ENCODE measurements at regions of chr5 and their contacts with region 1.

Region 1: GRCh38 chr5:79020861-79021561 is 35.9 kb upstream of the ARSB start:
- DNase-seq: peak; percentile 80
- H3K4me3 ChIP-seq: peak overlapping the region in 1 of 3 experiments; percentile 40
- H3K27ac ChIP-seq: no peak overlapping the region
- H3K4me1 ChIP-seq: peaks cover 16% of the 10 kb centered on the region
- H3K27me3 ChIP-seq: peaks cover 2 to 14% of the 10 kb centered on the region in 2 experiments
- CTCF ChIP-seq: peak; percentile 73 to 78
- POLR2A ChIP-seq: no peak

Region 2: DNA sequence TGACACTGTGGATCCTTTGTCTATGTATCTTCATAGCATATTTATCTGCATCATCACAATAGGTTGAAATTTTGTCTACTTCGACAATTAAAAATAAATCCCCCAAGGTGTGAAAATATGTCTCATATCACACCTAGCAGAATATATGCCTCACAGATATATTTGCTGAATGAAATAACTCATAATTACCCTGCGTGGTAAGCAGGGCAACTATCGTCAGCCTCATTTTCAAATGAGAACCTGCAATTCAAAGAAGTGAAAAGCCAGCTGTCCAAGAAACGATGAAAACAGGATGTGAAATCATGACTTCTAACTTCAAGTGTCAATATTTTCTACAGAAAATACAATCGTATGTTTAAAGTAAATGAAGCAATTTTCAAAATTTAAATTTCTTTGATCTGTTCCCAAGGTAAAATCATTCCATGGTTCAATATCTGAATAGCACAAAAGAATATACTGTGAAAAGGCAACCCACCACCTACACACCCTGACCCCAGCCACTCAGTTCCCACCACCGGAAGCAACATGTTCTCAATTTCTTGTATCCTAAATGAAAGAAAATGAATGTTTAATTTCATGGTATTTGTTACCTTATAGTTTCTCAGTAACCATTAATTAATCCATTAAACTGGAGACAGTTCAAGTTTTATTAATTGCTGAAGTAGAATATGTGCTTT is 1301.9 kb before region 1 on chr5:
- CTCF ChIA-PET with region 1: no interaction called
- POLR2A ChIA-PET with region 1: no interaction called
- dilution Hi-C with region 1: no loop called
- intact Hi-C with region 1: no loop called
- DNase-seq: no peak
- H3K4me3 ChIP-seq: no peak overlapping the region
- H3K27ac ChIP-seq: no peak overlapping the region
- H3K4me1 ChIP-seq: no peaks in the 10 kb centered on the region
- H3K27me3 ChIP-seq: no peaks in the 10 kb centered on the region
- CTCF ChIP-seq: no peak
- POLR2A ChIP-seq: no peak

Region 3: GRCh38 chr5:78458843-78459242 is 562.2 kb before region 1 on chr5:
- CTCF ChIA-PET with region 1: no interaction called
- POLR2A ChIA-PET with region 1: no interaction called
- dilution Hi-C with region 1: no loop called
- intact Hi-C with region 1: no loop called
- DNase-seq: no peak
- H3K4me3 ChIP-seq: no peak overlapping the region
- H3K27ac ChIP-seq: no peak overlapping the region
- H3K4me1 ChIP-seq: no peaks in the 10 kb centered on the region
- H3K27me3 ChIP-seq: no peaks in the 10 kb centered on the region
- CTCF ChIP-seq: no peak
- POLR2A ChIP-seq: no peak

Region 4: DNA sequence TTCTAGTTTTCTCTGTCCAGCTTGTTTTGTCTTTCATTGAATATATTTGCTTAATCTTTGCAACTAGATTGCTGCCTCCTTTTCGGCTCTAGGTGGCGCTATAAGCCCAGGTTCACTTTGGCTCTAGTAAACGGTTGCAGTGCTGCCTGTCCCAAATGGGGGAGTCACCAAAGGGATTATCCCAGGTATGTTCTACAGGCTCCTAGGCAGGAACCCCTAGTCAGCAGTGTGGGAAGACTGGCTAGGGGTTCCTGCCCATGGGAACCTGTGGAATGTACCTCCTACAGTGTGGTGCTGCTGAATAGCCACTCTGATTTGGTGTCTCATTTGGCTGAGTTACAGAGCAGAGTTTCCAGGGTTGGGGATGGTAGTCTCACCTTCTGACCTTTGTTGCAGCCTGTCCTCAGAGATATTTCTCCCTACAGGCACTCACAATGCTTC is 121.1 kb before region 1 on chr5:
- CTCF ChIA-PET with region 1: interaction called, 168 read pairs
- POLR2A ChIA-PET with region 1: no interaction called
- dilution Hi-C with region 1: no loop called
- intact Hi-C with region 1: loop called (anchors 1 kb)
- DNase-seq: peak; percentile 69
- H3K4me3 ChIP-seq: no peak overlapping the region
- H3K27ac ChIP-seq: no peak overlapping the region
- H3K4me1 ChIP-seq: no peaks in the 10 kb centered on the region
- H3K27me3 ChIP-seq: no peaks in the 10 kb centered on the region
- CTCF ChIP-seq: peak; percentile 78 to 82
- POLR2A ChIP-seq: no peak

Region 5: DNA sequence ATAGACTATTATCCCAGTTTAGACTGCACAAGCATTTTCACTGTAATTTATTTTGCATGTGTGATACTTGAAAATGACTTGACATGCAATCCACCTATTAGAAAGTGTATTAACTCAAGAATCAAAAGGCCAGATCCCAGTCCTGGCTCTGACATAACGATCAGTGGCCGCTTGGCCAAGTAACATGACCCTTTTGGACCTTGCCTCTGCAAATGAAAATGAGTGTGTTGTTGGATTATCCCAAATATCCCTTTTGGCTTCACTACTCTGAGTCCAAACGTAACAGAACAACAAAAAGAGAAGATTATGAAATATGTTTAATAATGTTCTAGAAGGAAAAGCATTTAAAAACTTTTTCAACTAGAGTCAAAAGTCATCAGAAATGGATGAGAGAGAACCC is 29.5 kb after region 1 on chr5:
- CTCF ChIA-PET with region 1: interaction called, 13 read pairs
- POLR2A ChIA-PET with region 1: no interaction called
- dilution Hi-C with region 1: no loop called
- intact Hi-C with region 1: no loop called
- DNase-seq: no peak
- H3K4me3 ChIP-seq: no peak overlapping the region
- H3K27ac ChIP-seq: no peak overlapping the region
- H3K4me1 ChIP-seq: no peaks in the 10 kb centered on the region
- H3K27me3 ChIP-seq: peaks cover 0 to 3% of the 10 kb centered on the region in 2 experiments
- CTCF ChIP-seq: no peak
- POLR2A ChIP-seq: no peak

Region 6: DNA sequence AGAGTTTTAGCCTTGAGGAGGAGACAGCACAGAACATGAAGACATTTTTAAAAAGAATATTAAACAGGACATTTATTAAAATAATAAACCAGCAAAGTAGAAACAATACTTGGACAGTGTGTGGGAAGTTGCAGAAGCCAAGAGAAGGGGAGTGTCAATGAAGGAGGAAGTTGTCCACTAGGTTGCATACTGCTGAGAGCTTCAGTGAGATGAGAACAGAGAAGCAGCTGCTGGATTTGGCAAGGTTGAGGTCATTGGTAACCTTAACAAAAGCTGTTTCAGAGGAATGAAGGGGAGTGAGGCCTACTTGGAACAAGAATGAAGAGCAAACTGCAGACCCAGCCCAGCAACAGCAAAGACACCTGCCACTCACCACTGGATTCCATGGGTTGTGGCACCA is 102.0 kb after region 1 on chr5:
- CTCF ChIA-PET with region 1: interaction called, 16 read pairs
- POLR2A ChIA-PET with region 1: no interaction called
- dilution Hi-C with region 1: no loop called
- intact Hi-C with region 1: no loop called
- DNase-seq: no peak
- H3K4me3 ChIP-seq: no peak overlapping the region
- H3K27ac ChIP-seq: no peak overlapping the region
- H3K4me1 ChIP-seq: no peaks in the 10 kb centered on the region
- H3K27me3 ChIP-seq: no peaks in the 10 kb centered on the region
- CTCF ChIP-seq: no peak
- POLR2A ChIP-seq: no peak

Region 7: GRCh38 chr5:79255786-79256557 is 235.0 kb after region 1 on chr5:
- CTCF ChIA-PET with region 1: interaction called, 7 read pairs
- POLR2A ChIA-PET with region 1: no interaction called
- dilution Hi-C with region 1: no loop called
- intact Hi-C with region 1: loop called (anchors 5 kb)
- DNase-seq: peak; percentile 48
- H3K4me3 ChIP-seq: no peak overlapping the region
- H3K27ac ChIP-seq: no peak overlapping the region
- H3K4me1 ChIP-seq: no peaks in the 10 kb centered on the region
- H3K27me3 ChIP-seq: no peaks in the 10 kb centered on the region
- CTCF ChIP-seq: peak; percentile 74 to 76
- POLR2A ChIP-seq: no peak

Region 8: GRCh38 chr5:79488775-79489174 is 467.8 kb after region 1 on chr5:
- CTCF ChIA-PET with region 1: interaction called, 10 read pairs
- POLR2A ChIA-PET with region 1: no interaction called
- dilution Hi-C with region 1: no loop called
- intact Hi-C with region 1: no loop called
- DNase-seq: no peak
- H3K4me3 ChIP-seq: no peak overlapping the region
- H3K27ac ChIP-seq: no peak overlapping the region
- H3K4me1 ChIP-seq: no peaks in the 10 kb centered on the region
- H3K27me3 ChIP-seq: no peaks in the 10 kb centered on the region
- CTCF ChIP-seq: no peak
- POLR2A ChIP-seq: no peak

Region 9: GRCh38 chr5:79774171-79774854 is 753.3 kb after region 1 on chr5:
- CTCF ChIA-PET with region 1: interaction called, 10 read pairs
- POLR2A ChIA-PET with region 1: no interaction called
- dilution Hi-C with region 1: no loop called
- intact Hi-C with region 1: no loop called
- DNase-seq: no peak
- H3K4me3 ChIP-seq: no peak overlapping the region
- H3K27ac ChIP-seq: no peak overlapping the region
- H3K4me1 ChIP-seq: no peaks in the 10 kb centered on the region
- H3K27me3 ChIP-seq: no peaks in the 10 kb centered on the region
- CTCF ChIP-seq: no peak
- POLR2A ChIP-seq: no peak

Measured in endothelial cell of umbilical vein (primary cell).